GM10248 (cell line): ENCODE measurements at regions of chr4 and their contacts with region 1.

Region 1: DNA sequence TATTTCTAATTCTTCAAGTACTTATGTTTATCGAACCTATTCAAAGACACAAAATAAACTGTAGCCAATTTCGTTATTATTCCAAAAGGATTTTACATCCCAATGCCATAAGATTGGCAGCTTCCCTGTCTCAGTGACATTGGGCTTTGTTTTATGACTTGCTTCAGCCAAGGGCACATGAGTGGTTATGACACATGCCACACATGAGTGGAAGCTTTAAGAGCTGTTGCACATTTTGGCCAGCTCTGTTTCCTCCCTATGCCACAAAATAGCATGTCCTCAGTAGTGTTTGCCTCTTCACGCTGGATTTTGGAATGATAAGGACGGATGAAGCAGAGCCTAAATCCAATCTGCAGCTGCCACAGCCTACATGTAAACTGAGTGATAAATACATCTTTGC is 21.9 kb downstream of the SEC24D start:
- DNase-seq: no peak
- CTCF ChIP-seq: no peak

Region 2: DNA sequence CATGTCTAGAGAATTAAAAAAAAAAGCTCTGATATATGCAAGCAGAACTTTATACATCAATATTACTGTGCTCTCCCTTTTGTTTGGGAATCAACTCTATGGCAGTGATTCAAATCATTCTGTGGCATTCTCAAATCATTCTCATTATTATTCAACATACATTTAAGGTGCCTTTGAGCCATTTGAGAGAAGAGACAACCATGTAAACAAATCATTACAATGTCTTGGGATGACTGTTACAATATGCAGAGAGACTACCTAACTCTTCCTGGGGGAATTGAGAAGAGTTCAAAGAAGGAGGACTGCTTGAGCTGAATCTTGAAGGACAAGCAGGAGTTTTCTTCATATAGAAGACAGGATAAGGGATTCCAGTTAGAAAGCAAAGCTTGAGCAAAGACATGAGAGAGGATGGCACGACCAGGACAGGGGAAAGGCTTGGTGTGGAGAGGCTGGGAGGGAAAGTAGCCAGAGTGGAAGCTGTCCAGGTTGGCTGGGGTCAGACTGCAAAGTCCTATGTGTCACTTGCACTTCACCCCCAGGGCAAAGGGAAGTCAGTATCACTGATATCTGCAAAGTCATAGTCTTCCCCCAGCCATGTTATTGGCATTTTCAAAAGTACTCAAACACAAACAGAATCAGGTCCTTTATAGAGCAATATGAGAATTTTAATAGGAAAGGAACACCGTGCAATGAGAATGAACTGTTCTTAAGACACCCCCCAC is 12.8 kb after region 1 on chr4:
- CTCF ChIA-PET with region 1: interaction called, 15 read pairs
- POLR2A ChIA-PET with region 1: interaction called, 3 read pairs
- DNase-seq: no peak
- CTCF ChIP-seq: no peak